Ovary (tissue), 10 donors: ENCODE measurements at regions of chr15 and their contacts with region 1.

Region 1: DNA sequence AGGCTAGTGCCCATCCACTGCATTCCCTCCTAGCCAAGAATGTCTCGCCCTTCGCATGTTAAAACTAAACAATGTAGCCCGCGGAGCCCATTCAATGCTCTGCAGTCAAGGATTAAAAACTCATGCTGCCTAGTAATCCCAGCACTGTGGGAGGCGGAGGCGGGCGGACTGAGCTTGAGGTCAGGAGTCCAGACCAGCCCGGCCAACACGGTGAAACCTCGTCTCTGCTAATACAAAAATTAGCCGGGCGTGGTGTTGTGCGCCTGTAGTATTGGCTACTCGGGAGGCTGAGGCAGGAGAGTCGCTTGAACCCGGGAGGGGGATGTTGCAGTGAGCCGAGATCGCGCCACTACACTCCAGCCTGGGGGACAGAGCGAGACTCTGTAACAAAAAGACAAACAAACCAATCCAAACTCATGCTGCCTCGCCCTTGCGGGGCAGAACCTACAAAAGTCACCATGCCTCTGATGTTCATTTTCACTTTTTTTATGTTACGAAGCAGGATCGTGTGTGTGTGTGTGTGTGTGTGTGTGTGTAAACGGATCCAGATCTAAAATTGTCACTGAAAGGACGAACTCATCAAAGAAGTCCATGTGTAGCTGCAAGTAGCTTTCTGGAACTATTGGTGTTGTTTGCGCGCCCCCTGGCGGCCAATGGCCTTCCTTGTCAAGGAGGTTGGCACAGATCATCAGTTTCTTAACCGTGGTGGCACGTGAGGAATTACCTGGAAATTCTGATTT is 54.8 kb upstream of the SPESP1 start:
- DNase-seq: peak; percentile 87 to 95 (median 94)
- H3K4me3 ChIP-seq: peak overlapping the region; percentile 31
- H3K27ac ChIP-seq: no peak overlapping the region
- H3K4me1 ChIP-seq: no peaks in the 10 kb centered on the region
- H3K27me3 ChIP-seq: no peaks in the 10 kb centered on the region
- CTCF ChIP-seq: peak; percentile 72 to 92 (median 90)
- EP300 ChIP-seq: no peak
- POLR2A ChIP-seq: no peak

Region 2: DNA sequence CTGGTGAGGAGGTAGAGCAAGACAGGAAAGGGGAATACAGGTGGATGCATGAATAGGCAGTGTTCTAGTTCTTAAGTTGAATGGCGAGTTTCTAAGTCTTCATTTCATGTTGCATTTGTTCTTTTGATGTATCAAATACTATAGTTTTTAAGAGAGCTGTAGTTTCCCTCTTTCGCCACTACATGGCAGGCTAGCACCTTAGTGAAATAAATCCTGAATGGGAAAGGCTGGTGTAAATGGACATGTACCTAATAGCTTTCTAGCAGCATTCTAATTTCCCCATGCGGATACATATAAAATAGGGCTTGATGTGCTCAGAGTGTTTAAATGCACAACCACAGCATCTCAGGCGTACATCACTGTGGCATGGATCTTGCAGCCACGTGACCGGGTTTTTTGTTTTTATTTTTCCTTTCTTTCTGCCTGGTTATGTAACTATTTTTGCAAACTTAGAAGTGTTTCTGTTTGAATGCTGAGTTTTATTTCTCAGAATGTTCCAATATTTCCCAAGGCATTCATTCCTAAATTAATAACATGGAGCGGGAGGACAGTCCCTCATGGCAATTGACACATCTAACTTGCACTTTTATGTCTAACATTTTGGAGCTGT is 622.5 kb before region 1 on chr15:
- intact Hi-C with region 1: loop called in 1 of 4 experiments (anchors 10 kb)
- DNase-seq: peak in 2 of 5 donors; percentile 31 to 57
- H3K4me3 ChIP-seq: no peak overlapping the region
- H3K27ac ChIP-seq: no peak overlapping the region
- H3K4me1 ChIP-seq: peaks cover 4% of the 10 kb centered on the region
- H3K27me3 ChIP-seq: no peaks in the 10 kb centered on the region
- CTCF ChIP-seq: peak; percentile 86 to 91 (median 87)
- EP300 ChIP-seq: no peak
- POLR2A ChIP-seq: no peak

Region 3: GRCh38 chr15:68550481-68551295 is 324.9 kb before region 1 on chr15:
- intact Hi-C with region 1: loop called (anchors 2 to 5 kb)
- DNase-seq: peak; percentile 73 to 86 (median 84)
- H3K4me3 ChIP-seq: no peak overlapping the region
- H3K27ac ChIP-seq: no peak overlapping the region
- H3K4me1 ChIP-seq: no peaks in the 10 kb centered on the region
- H3K27me3 ChIP-seq: no peaks in the 10 kb centered on the region
- CTCF ChIP-seq: peak; percentile 84 to 88 (median 87)
- EP300 ChIP-seq: no peak
- POLR2A ChIP-seq: peak; percentile 7

Region 4: GRCh38 chr15:68672781-68673205 is 202.8 kb before region 1 on chr15:
- intact Hi-C with region 1: loop called in 1 of 4 experiments (anchors 10 kb)
- DNase-seq: peak in 4 of 5 donors; percentile 27 to 41 (median 32)
- H3K4me3 ChIP-seq: no peak overlapping the region
- H3K27ac ChIP-seq: no peak overlapping the region
- H3K4me1 ChIP-seq: peaks cover 21% of the 10 kb centered on the region
- H3K27me3 ChIP-seq: no peaks in the 10 kb centered on the region
- CTCF ChIP-seq: peak in 2 of 3 donors; percentile 19 to 21
- EP300 ChIP-seq: no peak
- POLR2A ChIP-seq: no peak

Region 5: DNA sequence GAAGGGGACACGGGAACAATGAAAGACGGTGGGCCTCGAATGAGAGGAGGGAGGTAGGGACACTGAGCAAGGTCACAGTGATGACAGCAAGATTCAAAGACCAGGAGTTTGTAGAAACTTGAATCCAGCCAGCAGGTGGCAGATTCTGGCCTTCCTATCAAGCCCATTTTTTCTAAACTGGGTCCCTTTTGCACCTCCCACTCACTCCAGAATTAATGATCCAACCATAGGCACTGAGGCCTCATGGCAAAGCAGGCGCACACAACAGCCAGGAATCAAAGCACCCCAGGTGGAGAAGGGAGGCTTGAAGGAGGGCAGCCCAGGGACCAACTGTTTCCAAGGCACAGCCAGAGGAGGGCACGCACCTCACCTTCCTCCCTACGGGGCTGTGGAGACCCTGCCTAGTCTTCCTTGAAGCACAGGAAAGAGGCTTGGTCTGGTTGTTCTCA is 145.1 kb before region 1 on chr15:
- intact Hi-C with region 1: loop called in 3 of 4 experiments (anchors 5 to 10 kb)
- DNase-seq: peak in 1 of 5 donors; percentile 55
- H3K4me3 ChIP-seq: no peak overlapping the region
- H3K27ac ChIP-seq: no peak overlapping the region
- H3K4me1 ChIP-seq: peaks cover 18% of the 10 kb centered on the region
- H3K27me3 ChIP-seq: no peaks in the 10 kb centered on the region
- CTCF ChIP-seq: peak; percentile 9 to 44 (median 27)
- EP300 ChIP-seq: no peak
- POLR2A ChIP-seq: no peak